ENCODE measurements at regions of chr9 and their contacts with region 1.

Region 1: GRCh38 chr9:69672596-69673310 is 582 bp upstream of the APBA1 start:
- DNase-seq: peak; percentile 48
- ATAC-seq: peak; percentile 93
- H3K4me3 Mint-ChIP-seq: peak overlapping the region; percentile 81
- H3K27ac Mint-ChIP-seq: no peak overlapping the region
- H3K4me1 Mint-ChIP-seq: peaks cover 18% of the 10 kb centered on the region
- H3K27me3 Mint-ChIP-seq: peaks cover 27% of the 10 kb centered on the region
- CTCF ChIP-seq: no peak

Region 2: DNA sequence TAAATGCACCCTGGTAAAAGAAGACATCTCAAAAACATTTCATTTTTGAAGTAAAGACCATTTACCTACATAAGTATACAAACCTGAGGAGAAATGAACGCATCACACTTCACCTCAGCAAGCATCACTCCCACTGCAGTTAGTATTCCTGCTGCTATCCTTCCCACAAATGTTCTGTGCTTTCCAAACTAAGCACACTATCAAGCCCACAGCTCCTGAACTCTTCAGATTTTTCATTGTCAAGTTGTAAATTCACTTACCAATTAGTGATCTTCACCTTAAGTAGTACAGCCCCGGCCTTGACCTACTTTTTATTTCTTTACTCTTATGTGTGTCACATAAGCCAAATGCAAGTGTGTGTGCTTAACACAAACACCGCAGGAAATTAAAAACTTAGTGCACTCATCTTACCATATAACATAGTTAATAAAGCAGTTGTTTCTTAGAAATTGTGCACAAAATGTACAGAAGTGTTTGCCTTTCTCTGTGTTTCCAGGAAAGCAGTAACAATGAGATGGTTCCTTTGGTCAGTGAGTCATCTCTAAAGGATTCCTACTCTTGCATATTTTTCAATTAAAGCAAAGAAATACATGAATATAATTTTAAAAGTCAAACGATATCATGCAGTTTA is 170.0 kb before region 1 on chr9:
- CTCF ChIA-PET with region 1: no interaction called
- POLR2A ChIA-PET with region 1: no interaction called
- intact Hi-C with region 1: no loop called
- DNase-seq: no peak
- ATAC-seq: no peak
- H3K4me3 Mint-ChIP-seq: no peak overlapping the region
- H3K27ac Mint-ChIP-seq: no peak overlapping the region
- H3K4me1 Mint-ChIP-seq: no peaks in the 10 kb centered on the region
- H3K27me3 Mint-ChIP-seq: no peaks in the 10 kb centered on the region
- CTCF ChIP-seq: no peak

Region 3: GRCh38 chr9:69759421-69760277 is 86.9 kb after region 1 on chr9 and contains the start of gene PTAR1:
- CTCF ChIA-PET with region 1: no interaction called
- POLR2A ChIA-PET with region 1: no interaction called
- intact Hi-C with region 1: loop called (anchors 2 kb)
- DNase-seq: peak; percentile 92
- ATAC-seq: peak; percentile 86
- H3K4me3 Mint-ChIP-seq: peak within 1 kb of the TSS; percentile 95
- H3K27ac Mint-ChIP-seq: peak within 1 kb of the TSS; percentile 94
- H3K4me1 Mint-ChIP-seq: peaks cover 25% of the 10 kb centered on the region
- H3K27me3 Mint-ChIP-seq: no peaks in the 10 kb centered on the region
- CTCF ChIP-seq: no peak
- total RNA-seq, gene PTAR1: 39.3 and 49.5 TPM in 2 replicates

Region 4: DNA sequence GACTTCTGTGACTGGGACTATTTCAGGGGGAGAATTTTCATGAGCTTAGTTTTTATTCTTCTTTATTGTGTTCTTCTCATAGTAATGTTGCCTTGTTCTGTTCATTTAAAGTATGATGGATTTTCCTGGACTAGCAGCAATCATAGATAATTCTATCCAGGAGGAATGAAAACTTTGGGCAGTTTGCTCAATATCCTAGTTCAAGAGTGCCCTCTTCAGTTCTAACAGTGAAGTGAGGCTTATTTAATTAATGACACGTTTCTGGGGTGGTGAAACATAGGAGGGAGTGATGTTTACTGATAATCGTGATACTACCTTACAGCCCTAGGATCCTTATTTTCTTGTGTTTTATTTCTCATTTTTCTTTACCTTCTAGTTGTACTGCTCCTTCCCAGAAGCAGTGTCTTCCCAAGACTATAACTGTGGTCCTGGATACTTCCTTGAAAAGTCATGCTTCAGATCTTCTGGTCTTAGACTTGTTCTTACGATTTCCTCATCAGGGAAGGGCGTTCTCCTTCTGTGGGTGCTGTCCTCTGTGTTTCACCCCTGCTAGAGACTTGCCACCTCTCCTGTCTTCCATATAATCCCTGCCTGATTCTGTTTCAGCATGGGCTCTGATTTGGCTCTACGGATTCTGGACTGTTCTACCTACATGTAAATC is 205.2 kb after region 1 on chr9:
- CTCF ChIA-PET with region 1: no interaction called
- POLR2A ChIA-PET with region 1: no interaction called
- intact Hi-C with region 1: loop called (anchors 1 kb)
- DNase-seq: no peak
- ATAC-seq: no peak
- H3K4me3 Mint-ChIP-seq: no peak overlapping the region
- H3K27ac Mint-ChIP-seq: no peak overlapping the region
- H3K4me1 Mint-ChIP-seq: no peaks in the 10 kb centered on the region
- H3K27me3 Mint-ChIP-seq: peaks cover 11% of the 10 kb centered on the region
- CTCF ChIP-seq: no peak

Region 5: GRCh38 chr9:69919461-69920061 is 246.8 kb after region 1 on chr9:
- CTCF ChIA-PET with region 1: interaction called, 3 read pairs
- POLR2A ChIA-PET with region 1: no interaction called
- intact Hi-C with region 1: loop called (anchors 1 kb)
- DNase-seq: no peak
- ATAC-seq: peak; percentile 50
- H3K4me3 Mint-ChIP-seq: no peak overlapping the region
- H3K27ac Mint-ChIP-seq: no peak overlapping the region
- H3K4me1 Mint-ChIP-seq: no peaks in the 10 kb centered on the region
- H3K27me3 Mint-ChIP-seq: no peaks in the 10 kb centered on the region
- CTCF ChIP-seq: no peak